Activated T-helper 1 cell treated with anti-CD3 and anti-CD28 coated beads, Interleukin-12 subunit alpha, Interleukin-12 subunit beta, Interleukin-2, Interleukin-4 antibody, amounts not matched to agents 30 ng/mL and 10 ng/mL and 1 ng/mL, durations not matched to agents 14 hours and 24 hours and 36 hours (primary cell): ENCODE measurements at regions of chr6 and their contacts with region 1.

Region 1: GRCh38 chr6:30556066-30556905 is at the start of gene GNL1:
- DNase-seq: peak; percentile 96
- H3K4me3 Mint-ChIP-seq: peak within 1 kb of the TSS; percentile 96
- H3K27ac Mint-ChIP-seq: peak within 1 kb of the TSS; percentile 99
- H3K4me1 Mint-ChIP-seq: peaks cover 36% of the 10 kb centered on the region
- H3K27me3 Mint-ChIP-seq: no peaks in the 10 kb centered on the region
- total RNA-seq, gene GNL1: 86.3 and 92.4 TPM in 2 replicates

Region 2: GRCh38 chr6:30130887-30131862 is 425.1 kb before region 1 on chr6:
- intact Hi-C with region 1: no loop called
- DNase-seq: peak; percentile 57
- H3K4me3 Mint-ChIP-seq: no peak overlapping the region
- H3K27ac Mint-ChIP-seq: no peak overlapping the region
- H3K4me1 Mint-ChIP-seq: peaks cover 30% of the 10 kb centered on the region
- H3K27me3 Mint-ChIP-seq: peaks cover 65% of the 10 kb centered on the region

Region 3: DNA sequence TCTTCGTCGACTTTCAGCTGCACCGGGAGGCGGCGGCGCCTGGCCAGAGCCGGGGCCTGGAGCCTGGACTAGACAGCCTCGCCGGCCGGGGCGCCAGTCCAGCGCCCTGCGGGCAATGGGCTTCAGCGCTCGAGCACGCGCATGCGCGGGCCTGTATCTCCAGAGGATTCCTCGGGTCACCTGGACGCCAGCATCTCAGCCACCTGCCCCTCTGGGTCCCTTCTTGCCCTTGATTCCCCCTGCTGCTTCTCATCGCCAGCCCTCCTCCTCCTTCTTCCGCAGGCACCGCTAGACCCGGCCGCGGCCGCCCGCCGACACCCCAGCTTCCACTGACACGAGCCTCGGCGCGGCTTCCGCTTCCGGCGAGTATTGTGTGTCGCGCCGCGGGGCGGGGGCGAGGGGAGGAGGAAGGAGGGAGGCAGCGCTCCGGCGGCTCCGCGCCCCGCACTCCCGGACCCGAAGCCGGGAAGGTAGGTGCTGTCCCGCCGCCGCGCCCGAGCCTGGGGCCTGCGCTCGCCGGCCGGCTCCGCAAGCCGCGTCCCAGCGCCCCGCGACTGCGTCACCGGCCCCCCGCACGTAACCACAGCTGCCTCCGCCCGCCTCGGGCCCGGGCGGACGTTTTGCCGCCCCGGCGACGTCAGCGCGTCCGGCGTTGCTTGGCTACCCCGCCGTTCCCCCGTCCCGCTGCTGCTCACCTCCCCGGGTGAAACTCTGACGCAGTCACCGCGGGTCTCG is 229.6 kb before region 1 on chr6 and contains the start of gene TRIM39:
- intact Hi-C with region 1: loop called (anchors 5 kb)
- DNase-seq: peak; percentile 85
- H3K4me3 Mint-ChIP-seq: peak within 1 kb of the TSS; percentile 99
- H3K27ac Mint-ChIP-seq: peak within 1 kb of the TSS; percentile 100
- H3K4me1 Mint-ChIP-seq: peaks cover 54% of the 10 kb centered on the region
- H3K27me3 Mint-ChIP-seq: no peaks in the 10 kb centered on the region
- total RNA-seq, gene TRIM39: 14.2 and 15.6 TPM in 2 replicates

Region 4: DNA sequence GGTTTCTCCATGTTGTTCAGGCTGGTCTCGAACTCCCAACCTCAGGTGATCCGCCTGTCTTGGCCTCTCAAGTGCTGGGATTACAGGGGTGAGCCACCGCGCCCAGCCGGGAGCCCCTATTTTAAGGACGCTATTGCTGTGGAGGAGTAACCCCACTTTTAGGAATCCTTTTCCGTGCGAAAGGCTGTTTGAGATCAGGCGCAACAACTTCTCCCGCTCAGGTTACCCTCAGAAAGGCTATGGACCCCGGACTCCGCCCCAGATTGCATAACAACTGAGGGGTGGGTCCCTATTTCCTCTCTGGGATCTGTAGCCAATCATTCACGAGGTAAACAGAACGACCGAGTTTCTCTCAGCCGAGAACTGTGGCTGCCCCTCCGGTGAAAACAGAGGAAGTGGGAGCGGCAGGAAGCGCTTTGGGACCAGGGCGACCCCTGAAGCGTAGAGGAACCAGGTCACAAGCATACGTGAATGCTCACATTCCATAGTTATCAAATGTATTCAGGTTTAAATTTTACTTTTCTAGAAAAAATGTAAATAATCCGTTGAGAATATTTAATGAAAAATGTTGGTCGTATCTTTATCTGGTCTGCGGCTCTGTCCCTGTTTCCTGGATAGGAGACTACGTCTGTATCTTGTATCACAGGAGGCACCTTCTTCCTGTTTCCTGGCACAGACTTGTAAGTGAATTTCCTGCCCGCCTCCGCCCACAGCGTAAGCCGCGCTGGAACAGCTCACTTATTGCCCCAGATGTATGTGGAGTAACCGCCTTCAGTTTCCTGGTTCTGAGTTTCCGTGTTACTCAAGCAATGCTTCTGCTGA is 40.1 kb before region 1 on chr6:
- intact Hi-C with region 1: loop called (anchors 1 kb)
- DNase-seq: peak; percentile 88
- H3K4me3 Mint-ChIP-seq: peak overlapping the region; percentile 83
- H3K27ac Mint-ChIP-seq: peak overlapping the region; percentile 97
- H3K4me1 Mint-ChIP-seq: peaks cover 49% of the 10 kb centered on the region
- H3K27me3 Mint-ChIP-seq: no peaks in the 10 kb centered on the region

Region 5: DNA sequence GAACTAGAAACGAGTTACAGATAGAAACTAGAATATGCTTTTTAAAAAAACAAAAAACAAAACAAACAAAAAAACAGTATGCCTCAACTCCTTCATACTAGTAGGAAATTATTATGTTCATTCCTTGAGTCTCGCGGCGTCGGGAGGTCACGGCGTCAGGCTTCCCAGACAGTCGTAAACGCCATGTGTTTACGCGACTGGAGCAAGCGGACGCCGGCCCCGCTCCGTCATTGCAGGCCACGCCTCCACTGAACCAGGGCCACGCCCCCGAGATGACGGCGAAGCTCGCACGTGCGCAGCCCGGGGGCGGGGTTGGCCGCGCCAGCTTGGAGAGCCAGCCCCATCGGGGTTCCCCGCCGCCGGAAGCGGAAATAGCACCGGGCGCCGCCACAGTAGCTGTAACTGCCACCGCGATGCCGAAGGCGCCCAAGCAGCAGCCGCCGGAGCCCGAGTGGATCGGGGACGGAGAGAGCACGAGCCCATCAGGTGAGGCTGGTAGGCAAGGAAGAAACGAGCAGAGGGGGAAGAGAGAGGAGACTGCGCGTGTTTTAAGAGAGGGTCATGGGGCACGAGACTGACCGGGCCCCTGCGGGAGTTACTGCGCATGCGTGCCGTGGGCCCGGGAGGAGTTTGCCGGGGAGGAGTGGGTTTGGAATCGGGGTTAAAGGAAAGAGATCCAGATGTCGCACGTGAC is 14.9 kb after region 1 on chr6 and contains the start of gene ABCF1:
- intact Hi-C with region 1: loop called (anchors 1 kb)
- DNase-seq: peak; percentile 100
- H3K4me3 Mint-ChIP-seq: peak within 1 kb of the TSS; percentile 98
- H3K27ac Mint-ChIP-seq: peak within 1 kb of the TSS; percentile 98
- H3K4me1 Mint-ChIP-seq: peaks cover 62% of the 10 kb centered on the region
- H3K27me3 Mint-ChIP-seq: no peaks in the 10 kb centered on the region
- total RNA-seq, gene ABCF1: 115 and 120 TPM in 2 replicates

Region 6: GRCh38 chr6:30590994-30591393 is 34.7 kb after region 1 on chr6:
- intact Hi-C with region 1: no loop called
- DNase-seq: no peak
- H3K4me3 Mint-ChIP-seq: no peak overlapping the region
- H3K27ac Mint-ChIP-seq: no peak overlapping the region
- H3K4me1 Mint-ChIP-seq: peaks cover 9% of the 10 kb centered on the region
- H3K27me3 Mint-ChIP-seq: no peaks in the 10 kb centered on the region

Region 7: DNA sequence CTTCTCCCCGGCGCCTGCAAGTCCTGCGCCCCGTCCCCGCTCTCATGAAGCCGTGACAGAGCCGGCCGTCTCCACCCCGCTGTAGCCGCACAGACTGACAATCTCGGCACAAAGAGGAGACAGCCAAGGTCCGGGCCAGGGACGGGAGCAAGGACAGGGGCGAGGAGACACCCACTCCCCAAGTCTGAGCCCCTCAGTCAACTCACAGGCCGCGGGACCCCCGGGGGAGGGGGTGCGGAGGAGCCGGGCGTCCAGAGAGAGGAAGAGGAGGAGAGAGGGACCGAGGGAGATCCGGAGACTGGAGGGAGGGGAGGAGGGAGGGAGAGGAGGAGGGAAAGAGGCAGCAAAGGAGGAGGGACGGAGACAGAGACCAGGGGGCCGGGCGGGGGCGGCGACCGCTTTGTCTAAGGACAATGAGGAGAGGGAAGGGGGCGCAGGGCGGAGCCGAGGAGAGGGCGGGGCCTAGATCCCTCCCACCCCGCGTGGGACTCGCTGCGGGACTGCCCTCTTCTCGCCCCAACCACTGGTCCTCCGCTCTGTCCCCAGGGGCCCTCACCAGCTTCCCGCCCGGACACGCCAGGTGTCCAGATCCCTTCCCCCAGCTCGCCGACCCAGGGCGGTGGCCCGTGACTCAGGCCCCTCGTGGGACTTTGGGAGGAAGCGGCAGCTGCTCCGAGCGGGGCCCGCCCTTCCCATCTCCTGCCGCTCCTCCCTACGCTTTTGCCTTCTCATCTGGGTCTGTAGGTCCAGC is 130.8 kb after region 1 on chr6:
- intact Hi-C with region 1: loop called (anchors 1 kb)
- DNase-seq: peak; percentile 83
- H3K4me3 Mint-ChIP-seq: peak overlapping the region; percentile 94
- H3K27ac Mint-ChIP-seq: peak overlapping the region; percentile 87
- H3K4me1 Mint-ChIP-seq: peaks cover 50% of the 10 kb centered on the region
- H3K27me3 Mint-ChIP-seq: no peaks in the 10 kb centered on the region

Region 8: GRCh38 chr6:30895341-30895740 is 339.1 kb after region 1 on chr6:
- intact Hi-C with region 1: no loop called
- DNase-seq: no peak
- H3K4me3 Mint-ChIP-seq: no peak overlapping the region
- H3K27ac Mint-ChIP-seq: no peak overlapping the region
- H3K4me1 Mint-ChIP-seq: no peaks in the 10 kb centered on the region
- H3K27me3 Mint-ChIP-seq: no peaks in the 10 kb centered on the region